Activated T-helper 2 cell treated with anti-CD3 and anti-CD28 coated beads, Interferon-gamma antibody, Interleukin-2, Interleukin-4, amounts not matched to agents 10 μg/mL and 5 μg/mL and 100 μg/mL, durations not matched to agents 14 hours and 24 hours and 36 hours (primary cell): ENCODE measurements at regions of chr5 and their contacts with region 1.

Region 1: DNA sequence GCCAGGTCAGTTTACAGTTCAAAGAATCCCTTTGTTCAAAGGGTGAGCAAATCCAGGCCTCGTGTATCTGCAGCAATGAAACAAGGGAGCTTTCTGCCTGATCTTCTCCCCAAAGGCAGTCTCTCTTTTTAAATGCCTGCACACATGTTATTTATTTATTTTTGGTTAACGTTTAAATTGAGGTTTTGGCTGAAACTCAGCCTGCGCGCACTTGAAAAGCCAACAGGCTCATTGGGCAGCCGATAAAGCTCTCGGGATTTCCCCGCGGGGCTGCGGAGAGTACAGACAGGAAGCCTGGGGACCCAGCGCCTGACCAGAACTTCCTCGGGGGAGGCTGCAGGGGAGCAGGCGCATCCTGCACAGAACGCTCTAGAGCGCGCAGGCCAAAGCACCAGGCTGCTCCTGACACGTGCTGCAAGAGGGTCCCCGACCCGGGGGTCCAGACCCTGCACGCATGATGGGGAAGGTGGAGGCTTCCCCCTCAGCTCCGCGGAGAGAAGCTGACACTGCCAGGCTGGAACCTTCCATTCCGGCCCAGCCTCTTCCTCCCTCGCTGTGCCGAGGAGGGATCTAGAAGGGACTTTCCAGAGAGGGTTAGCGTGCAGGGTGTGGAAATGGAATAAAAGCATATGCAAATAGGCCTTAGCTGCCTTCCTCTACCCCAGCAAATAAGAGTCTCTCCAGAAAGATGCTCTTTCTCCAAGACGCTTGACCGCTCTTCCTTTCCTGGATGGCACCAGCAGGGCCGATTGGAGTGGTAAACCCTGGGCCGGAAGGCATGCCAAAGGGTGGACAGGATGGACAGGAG is 46.1 kb downstream of the PTTG1 start:
- DNase-seq: peak; percentile 84
- H3K4me3 Mint-ChIP-seq: peak overlapping the region; percentile 96
- H3K27ac Mint-ChIP-seq: peak overlapping the region; percentile 99
- H3K4me1 Mint-ChIP-seq: peaks cover 67% of the 10 kb centered on the region
- H3K27me3 Mint-ChIP-seq: no peaks in the 10 kb centered on the region

Region 2: GRCh38 chr5:160418561-160419457 is 49.0 kb before region 1 on chr5 and contains the start of gene SLU7:
- intact Hi-C with region 1: loop called (anchors 1 kb)
- DNase-seq: peak; percentile 91
- H3K4me3 Mint-ChIP-seq: peak within 1 kb of the TSS; percentile 96
- H3K27ac Mint-ChIP-seq: peak within 1 kb of the TSS; percentile 93
- H3K4me1 Mint-ChIP-seq: peaks cover 56% of the 10 kb centered on the region
- H3K27me3 Mint-ChIP-seq: no peaks in the 10 kb centered on the region
- total RNA-seq, gene SLU7: 41.3 and 44.3 TPM in 2 replicates

Region 3: GRCh38 chr5:160450164-160450932 is 17.4 kb before region 1 on chr5:
- intact Hi-C with region 1: no loop called
- DNase-seq: no peak
- H3K4me3 Mint-ChIP-seq: no peak overlapping the region
- H3K27ac Mint-ChIP-seq: no peak overlapping the region
- H3K4me1 Mint-ChIP-seq: peaks cover 40% of the 10 kb centered on the region
- H3K27me3 Mint-ChIP-seq: no peaks in the 10 kb centered on the region

Region 4: GRCh38 chr5:160488394-160489325 is 20.9 kb after region 1 on chr5:
- intact Hi-C with region 1: loop called (anchors 2 kb)
- DNase-seq: no peak
- H3K4me3 Mint-ChIP-seq: no peak overlapping the region
- H3K27ac Mint-ChIP-seq: peak overlapping the region; percentile 52
- H3K4me1 Mint-ChIP-seq: peaks cover 45% of the 10 kb centered on the region
- H3K27me3 Mint-ChIP-seq: no peaks in the 10 kb centered on the region

Region 5: GRCh38 chr5:160496334-160496733 is 28.6 kb after region 1 on chr5:
- intact Hi-C with region 1: loop called (anchors 1 kb)
- DNase-seq: no peak
- H3K4me3 Mint-ChIP-seq: no peak overlapping the region
- H3K27ac Mint-ChIP-seq: peak overlapping the region; percentile 75
- H3K4me1 Mint-ChIP-seq: peaks cover 42% of the 10 kb centered on the region
- H3K27me3 Mint-ChIP-seq: no peaks in the 10 kb centered on the region

Region 6: GRCh38 chr5:160539431-160539830 is 71.7 kb after region 1 on chr5:
- intact Hi-C with region 1: loop called (anchors 1 kb)
- DNase-seq: no peak
- H3K4me3 Mint-ChIP-seq: no peak overlapping the region
- H3K27ac Mint-ChIP-seq: no peak overlapping the region
- H3K4me1 Mint-ChIP-seq: peaks cover 32% of the 10 kb centered on the region
- H3K27me3 Mint-ChIP-seq: no peaks in the 10 kb centered on the region

Region 7: GRCh38 chr5:160657068-160657507 is 189.3 kb after region 1 on chr5:
- intact Hi-C with region 1: loop called (anchors 1 kb)
- DNase-seq: no peak
- H3K4me3 Mint-ChIP-seq: no peak overlapping the region
- H3K27ac Mint-ChIP-seq: peak overlapping the region; percentile 24
- H3K4me1 Mint-ChIP-seq: peaks cover 21% of the 10 kb centered on the region
- H3K27me3 Mint-ChIP-seq: no peaks in the 10 kb centered on the region